ENCODE measurements at regions of chr17 and their contacts with region 1.

Region 1: GRCh38 chr17:59329638-59330313 is 1.7 kb upstream of the YPEL2 start:
- DNase-seq: peak; percentile 49
- H3K4me3 ChIP-seq: no peak overlapping the region
- H3K27ac ChIP-seq: no peak overlapping the region
- H3K27me3 ChIP-seq: peaks cover 18% of the 10 kb centered on the region
- CTCF ChIP-seq: peak; percentile 96

Region 2: DNA sequence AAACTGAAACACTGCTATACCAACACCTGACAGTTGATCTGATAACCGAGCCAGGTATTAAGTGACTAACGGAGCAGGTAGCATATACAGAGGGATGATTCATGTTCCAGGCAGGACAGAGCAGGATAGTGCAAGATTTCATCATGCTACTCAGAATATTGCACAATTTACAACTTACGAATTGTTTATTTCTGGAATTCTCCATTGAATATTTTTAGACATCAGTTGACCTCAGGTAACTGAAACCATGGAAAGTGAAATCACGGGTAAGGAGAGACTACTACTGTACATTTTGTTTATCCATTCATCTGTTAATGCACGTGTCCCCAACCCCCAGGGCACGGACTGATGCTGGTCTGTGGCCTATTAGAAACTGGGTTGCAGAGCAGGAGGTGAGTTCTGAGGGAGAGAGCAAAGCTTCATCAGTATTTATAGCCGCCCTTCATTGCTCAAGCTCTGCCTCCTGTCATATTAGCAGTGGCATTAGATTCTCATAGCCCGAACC is 588.6 kb before region 1 on chr17:
- CTCF ChIA-PET with region 1: no interaction called
- POLR2A ChIA-PET with region 1: no interaction called
- DNase-seq: peak; percentile 27
- H3K4me3 ChIP-seq: no peak overlapping the region
- H3K27ac ChIP-seq: peak overlapping the region; percentile 34
- H3K27me3 ChIP-seq: no peaks in the 10 kb centered on the region
- CTCF ChIP-seq: no peak

Region 3: DNA sequence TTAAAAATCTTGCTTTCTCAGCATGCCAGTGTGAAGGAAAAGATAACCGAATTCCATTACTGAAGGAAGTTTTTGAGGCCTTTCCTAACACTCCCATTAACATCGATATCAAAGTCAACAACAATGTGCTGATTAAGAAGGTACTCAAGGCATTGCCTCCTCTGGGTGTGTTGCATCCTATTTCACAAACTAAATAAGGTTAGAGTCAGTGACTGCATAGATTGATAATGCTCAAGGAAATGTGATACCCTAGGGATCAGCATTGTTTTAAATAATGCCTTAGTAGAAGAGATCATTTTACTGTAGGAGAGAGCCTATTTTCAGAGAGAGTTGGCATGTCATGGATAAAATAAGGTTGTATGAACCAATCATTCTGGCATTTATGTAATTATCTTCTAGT is 72.7 kb before region 1 on chr17:
- CTCF ChIA-PET with region 1: no interaction called
- POLR2A ChIA-PET with region 1: no interaction called
- DNase-seq: no peak
- H3K4me3 ChIP-seq: no peak overlapping the region
- H3K27ac ChIP-seq: no peak overlapping the region
- H3K27me3 ChIP-seq: no peaks in the 10 kb centered on the region
- CTCF ChIP-seq: no peak

Region 4: GRCh38 chr17:59400858-59401257 is 71.1 kb after region 1 on chr17:
- CTCF ChIA-PET with region 1: interaction called, 12 read pairs
- POLR2A ChIA-PET with region 1: no interaction called
- DNase-seq: no peak
- H3K4me3 ChIP-seq: no peak overlapping the region
- H3K27ac ChIP-seq: no peak overlapping the region
- H3K27me3 ChIP-seq: no peaks in the 10 kb centered on the region
- CTCF ChIP-seq: no peak

Region 5: GRCh38 chr17:59435238-59435637 is 105.5 kb after region 1 on chr17:
- CTCF ChIA-PET with region 1: interaction called, 117 read pairs
- POLR2A ChIA-PET with region 1: interaction called, 9 read pairs
- DNase-seq: no peak
- H3K4me3 ChIP-seq: no peak overlapping the region
- H3K27ac ChIP-seq: no peak overlapping the region
- H3K27me3 ChIP-seq: no peaks in the 10 kb centered on the region
- CTCF ChIP-seq: no peak

Region 6: GRCh38 chr17:59521204-59522126 is 191.7 kb after region 1 on chr17:
- CTCF ChIA-PET with region 1: interaction called, 15 read pairs
- POLR2A ChIA-PET with region 1: no interaction called
- DNase-seq: peak; percentile 21
- H3K4me3 ChIP-seq: no peak overlapping the region
- H3K27ac ChIP-seq: no peak overlapping the region
- H3K27me3 ChIP-seq: peaks cover 4% of the 10 kb centered on the region
- CTCF ChIP-seq: peak; percentile 85

Region 7: DNA sequence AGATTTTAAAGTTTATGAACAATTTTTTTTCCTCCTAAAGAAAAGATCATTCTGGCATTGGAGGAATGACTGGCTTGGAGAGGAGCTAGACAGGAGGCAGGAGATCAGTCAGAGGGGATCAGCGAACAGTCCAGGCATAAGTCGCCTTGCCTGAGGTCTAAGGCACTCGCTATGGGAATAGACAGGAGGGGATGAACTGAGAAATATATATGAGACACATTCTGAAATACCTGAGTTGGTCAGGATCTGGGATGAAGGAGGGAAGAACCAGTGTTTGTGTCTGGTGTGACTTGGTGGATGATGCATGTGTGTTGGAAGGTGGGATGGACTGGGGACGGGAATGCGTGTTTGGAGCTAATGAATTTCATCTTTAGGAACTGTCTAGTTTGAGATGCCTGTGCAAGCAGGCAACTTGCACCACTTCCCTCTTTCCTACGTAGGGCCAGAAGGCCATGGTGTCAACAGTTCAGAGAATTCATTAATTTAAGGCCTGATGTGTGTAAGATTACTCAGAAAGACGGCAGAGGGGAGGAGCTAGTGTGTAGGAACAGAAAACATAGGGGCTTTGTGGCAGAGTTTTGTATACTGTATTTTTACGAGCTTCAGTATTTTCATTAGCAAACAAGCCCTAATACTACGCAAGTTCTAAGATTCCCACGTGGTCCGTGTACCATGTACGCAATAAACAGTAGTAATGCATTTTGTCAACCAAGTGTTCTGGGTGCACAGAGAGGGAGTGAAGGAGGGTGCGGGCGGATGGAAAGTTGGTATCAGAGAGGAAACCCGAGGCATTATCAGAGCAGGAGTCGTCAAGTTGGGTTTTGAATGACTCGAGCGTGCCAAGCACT is 748.1 kb after region 1 on chr17:
- CTCF ChIA-PET with region 1: no interaction called
- POLR2A ChIA-PET with region 1: no interaction called
- DNase-seq: no peak
- H3K4me3 ChIP-seq: peak overlapping the region; percentile 95
- H3K27ac ChIP-seq: peak overlapping the region; percentile 63
- H3K27me3 ChIP-seq: no peaks in the 10 kb centered on the region
- CTCF ChIP-seq: no peak

Measured in AG04450 (cell line).